GM12878 (cell line): ENCODE measurements at regions of chr1 and their contacts with region 1.

Region 1: DNA sequence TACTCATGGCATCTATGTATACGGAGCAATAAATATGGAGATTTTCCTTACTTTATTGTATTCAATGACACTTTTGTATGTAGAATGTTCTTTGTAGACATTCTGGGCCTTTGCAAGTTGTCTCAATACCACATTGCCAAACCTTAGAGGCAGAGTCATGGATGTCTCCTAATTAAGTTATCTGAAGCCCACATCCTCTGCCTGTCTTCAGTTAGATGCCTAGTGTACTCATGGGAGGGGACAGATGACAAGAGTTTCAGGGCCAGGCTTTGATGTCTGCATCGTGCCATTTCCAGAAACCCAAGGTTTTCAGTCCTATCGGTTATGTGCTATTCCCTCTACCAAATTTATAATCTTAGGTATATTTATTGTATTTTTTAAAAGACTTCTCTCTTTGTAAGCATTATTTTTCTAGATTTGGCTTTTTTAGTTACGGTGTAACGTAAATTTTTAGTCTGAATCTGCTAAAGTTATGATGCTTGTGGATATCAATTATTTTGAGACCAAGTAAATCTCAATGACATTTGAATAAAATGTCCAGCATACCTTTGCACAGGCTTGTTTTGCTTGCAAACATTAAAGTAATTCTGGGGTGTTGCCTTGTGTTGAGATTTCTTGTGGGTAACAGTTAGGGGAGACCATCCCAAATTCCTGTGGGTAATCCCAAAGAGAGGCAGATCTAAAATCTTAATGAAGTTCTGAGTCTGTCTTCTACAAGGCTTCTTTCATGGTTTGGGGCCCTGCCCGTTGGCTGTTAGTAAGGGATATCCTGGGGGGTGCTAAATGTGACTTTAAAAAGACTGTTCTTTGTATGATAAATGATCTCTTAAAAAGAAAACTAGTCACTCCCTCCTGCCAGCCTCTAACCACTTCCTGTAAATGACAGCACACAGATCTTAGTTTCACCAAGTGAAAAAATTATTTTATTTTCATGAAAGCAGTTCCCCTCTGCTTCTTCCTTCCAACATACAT is 8.0 kb upstream of the MACF1 start:
- DNase-seq: no peak
- ATAC-seq: peak; percentile 77
- H3K4me3 ChIP-seq: peak overlapping the region; percentile 26
- H3K27ac ChIP-seq: peak overlapping the region; percentile 53
- H3K4me1 ChIP-seq: peaks cover 54% of the 10 kb centered on the region
- H3K27me3 ChIP-seq: no peaks in the 10 kb centered on the region
- CTCF ChIP-seq: no peak
- EP300 ChIP-seq: peak in 1 of 2 experiments; percentile 60; a peak in 1 of 4 replicates
- POLR2A ChIP-seq: no peak
- RAD21 ChIP-seq: no peak

Region 2: GRCh38 chr1:38671221-38671620 is 525.3 kb before region 1 on chr1:
- CTCF ChIA-PET with region 1: no interaction called
- POLR2A ChIA-PET with region 1: no interaction called
- RAD21 ChIA-PET with region 1: no interaction called
- SMC1A ChIA-PET with region 1: no interaction called
- in situ Hi-C with region 1: no loop called
- intact Hi-C with region 1: no loop called
- DNase-seq: no peak
- ATAC-seq: no peak
- H3K4me3 ChIP-seq: no peak overlapping the region
- H3K27ac ChIP-seq: no peak overlapping the region
- H3K4me1 ChIP-seq: no peaks in the 10 kb centered on the region
- H3K27me3 ChIP-seq: peaks cover 2% of the 10 kb centered on the region in 2 experiments; a peak in 2 of 4 replicates
- CTCF ChIP-seq: no peak
- EP300 ChIP-seq: no peak
- POLR2A ChIP-seq: no peak
- RAD21 ChIP-seq: no peak

Region 3: DNA sequence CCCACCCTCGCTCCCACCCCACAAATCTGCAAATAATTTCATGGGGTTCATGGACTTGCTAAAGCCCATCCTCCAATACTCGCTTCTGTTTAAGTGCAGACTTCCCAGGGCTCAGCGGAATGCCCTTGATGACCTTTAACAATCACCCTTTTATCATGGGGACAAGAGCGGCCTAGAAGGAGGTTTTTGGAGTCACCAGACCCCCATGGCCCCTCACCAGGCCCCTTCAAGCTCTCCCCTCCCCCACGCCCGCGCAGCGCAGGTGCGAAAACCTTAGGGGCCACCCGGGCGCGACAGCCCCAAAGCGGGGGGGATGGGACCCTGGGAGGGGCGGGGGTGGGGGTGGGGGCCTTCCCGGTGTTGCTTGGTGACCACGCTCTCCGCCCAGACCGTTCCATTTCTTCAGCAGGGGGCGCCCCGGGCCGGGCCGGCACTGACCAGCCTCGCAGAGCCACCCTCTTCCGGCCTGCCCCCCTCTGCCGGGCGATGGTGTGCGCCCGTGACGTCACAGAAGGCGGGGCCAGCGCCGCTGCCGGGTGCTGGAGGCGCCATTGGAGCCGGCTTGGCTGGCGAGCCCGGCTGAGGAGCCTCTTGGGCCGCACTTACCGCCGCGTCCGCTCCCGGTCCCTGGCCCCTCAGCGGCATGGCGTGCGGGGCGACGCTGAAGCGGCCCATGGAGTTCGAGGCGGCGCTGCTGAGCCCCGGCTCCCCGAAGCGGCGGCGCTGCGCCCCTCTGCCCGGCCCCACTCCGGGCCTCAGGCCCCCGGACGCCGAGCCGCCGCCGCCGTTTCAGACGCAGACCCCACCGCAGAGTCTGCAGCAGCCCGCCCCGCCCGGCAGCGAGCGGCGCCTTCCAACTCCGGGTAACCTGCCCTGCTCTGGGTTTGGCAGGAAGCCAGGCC is 205.5 kb before region 1 on chr1 and contains the start of gene AKIRIN1:
- CTCF ChIA-PET with region 1: no interaction called
- POLR2A ChIA-PET with region 1: no interaction called
- RAD21 ChIA-PET with region 1: no interaction called
- SMC1A ChIA-PET with region 1: no interaction called
- in situ Hi-C with region 1: no loop called
- intact Hi-C with region 1: no loop called
- DNase-seq: peak; percentile 84
- ATAC-seq: peak; percentile 95
- H3K4me3 ChIP-seq: peak within 1 kb of the TSS; percentile 100
- H3K27ac ChIP-seq: peak within 1 kb of the TSS; percentile 85
- H3K4me1 ChIP-seq: no peaks in the 10 kb centered on the region
- H3K27me3 ChIP-seq: no peaks in the 10 kb centered on the region
- CTCF ChIP-seq: no peak
- EP300 ChIP-seq: no peak
- POLR2A ChIP-seq: peak; percentile 99
- RAD21 ChIP-seq: no peak
- polyA plus RNA-seq, gene AKIRIN1: 7.5 to 16.3 TPM

Region 4: DNA sequence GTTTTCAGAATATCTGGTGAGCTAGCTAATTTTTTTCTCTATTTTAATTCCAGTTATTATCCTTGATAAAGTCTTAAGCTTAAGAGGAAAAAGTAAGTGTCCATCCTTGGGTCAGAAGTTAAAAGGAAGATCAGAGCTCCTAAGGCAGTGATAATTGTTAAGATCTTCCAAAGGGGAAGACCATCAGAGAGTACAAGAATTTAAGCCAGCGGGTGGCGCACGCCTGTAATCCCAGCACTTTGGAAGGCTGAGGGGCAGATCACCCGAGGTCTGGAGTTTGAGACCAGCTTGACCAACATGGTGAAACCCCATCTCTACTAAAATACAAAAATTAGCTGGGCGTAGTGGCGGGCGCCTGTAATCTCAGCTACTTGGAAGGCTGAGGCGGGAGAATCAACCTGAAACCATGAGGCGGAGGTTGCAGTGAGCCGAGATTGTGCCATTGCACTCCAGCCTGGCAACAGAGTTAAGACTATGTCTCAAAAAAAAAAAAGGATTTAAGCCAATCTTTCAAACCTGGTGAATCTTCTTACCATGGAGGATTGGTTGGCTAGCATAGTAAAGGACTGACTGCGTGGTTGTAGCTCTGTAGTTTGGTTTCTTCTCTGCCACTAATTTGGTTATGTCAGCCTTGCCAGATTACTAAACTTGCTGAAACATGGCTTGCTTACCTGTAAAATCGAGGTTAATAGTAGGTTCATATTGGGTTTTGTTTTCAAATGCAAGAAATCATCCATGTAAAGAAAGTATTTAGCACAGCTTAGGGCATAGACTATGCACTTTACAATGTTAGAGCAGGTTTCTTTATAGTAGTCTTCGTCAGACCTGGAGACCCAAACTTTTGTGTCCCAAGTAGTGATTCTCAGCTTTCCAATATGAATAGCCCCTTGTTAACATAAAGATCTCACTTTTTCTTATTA is 189.5 kb before region 1 on chr1:
- CTCF ChIA-PET with region 1: no interaction called
- POLR2A ChIA-PET with region 1: no interaction called
- RAD21 ChIA-PET with region 1: no interaction called
- SMC1A ChIA-PET with region 1: no interaction called
- in situ Hi-C with region 1: no loop called
- intact Hi-C with region 1: no loop called
- DNase-seq: no peak
- ATAC-seq: no peak
- H3K4me3 ChIP-seq: no peak overlapping the region
- H3K27ac ChIP-seq: no peak overlapping the region
- H3K4me1 ChIP-seq: no peaks in the 10 kb centered on the region
- H3K27me3 ChIP-seq: no peaks in the 10 kb centered on the region
- CTCF ChIP-seq: no peak
- EP300 ChIP-seq: no peak
- POLR2A ChIP-seq: no peak
- RAD21 ChIP-seq: no peak

Region 5: GRCh38 chr1:39091845-39092645 is 104.5 kb before region 1 on chr1:
- CTCF ChIA-PET with region 1: interaction called, 465 read pairs
- POLR2A ChIA-PET with region 1: interaction called, 3 read pairs
- RAD21 ChIA-PET with region 1: interaction called, 304 read pairs
- SMC1A ChIA-PET with region 1: interaction called, 164 read pairs
- in situ Hi-C with region 1: no loop called
- intact Hi-C with region 1: no loop called
- DNase-seq: no peak
- ATAC-seq: peak; percentile 89
- H3K4me3 ChIP-seq: no peak overlapping the region
- H3K27ac ChIP-seq: no peak overlapping the region
- H3K4me1 ChIP-seq: peaks cover 6% of the 10 kb centered on the region
- H3K27me3 ChIP-seq: no peaks in the 10 kb centered on the region
- CTCF ChIP-seq: peak; percentile 71 to 78 (median 78)
- EP300 ChIP-seq: no peak
- POLR2A ChIP-seq: no peak
- RAD21 ChIP-seq: peak; percentile 82

Region 6: DNA sequence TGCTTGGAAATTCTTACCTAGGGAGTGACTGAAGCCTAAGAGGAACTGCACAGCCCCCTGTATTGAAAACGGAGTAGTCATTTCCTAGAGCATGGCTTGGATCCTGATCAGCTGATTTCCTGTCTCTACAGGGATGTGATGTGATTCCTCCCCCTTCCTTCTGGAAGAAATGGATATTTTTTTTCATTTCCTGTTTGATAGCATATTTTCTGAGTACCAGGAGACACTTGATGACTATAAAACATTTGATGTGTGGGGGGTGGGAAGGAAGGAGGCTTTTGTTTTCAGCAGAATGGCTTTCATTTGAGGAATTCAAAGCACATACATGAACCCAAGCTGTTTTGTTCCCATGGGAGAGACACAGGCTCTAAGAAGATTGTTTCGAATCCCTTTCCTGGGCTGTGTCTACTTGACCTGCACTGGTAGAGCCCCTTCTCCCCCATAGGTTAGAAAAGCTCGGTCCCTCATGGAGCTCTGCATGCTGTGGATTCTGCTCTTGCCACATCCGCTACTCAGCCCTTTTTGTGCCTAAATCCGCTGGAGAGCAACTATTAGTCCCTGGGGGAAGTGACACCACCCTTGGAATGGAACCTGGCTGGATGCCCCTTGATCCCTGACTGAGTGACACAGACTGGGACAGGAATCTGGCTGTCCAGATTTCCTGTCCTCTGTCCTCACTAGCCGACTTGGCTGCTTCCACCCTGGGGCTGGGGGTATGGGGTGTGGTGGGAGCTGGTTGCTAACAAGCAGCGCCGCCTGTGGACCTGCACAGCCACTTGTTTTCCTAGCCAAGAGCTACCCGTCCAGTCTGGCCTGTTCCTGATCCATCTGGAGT is 63.8 kb before region 1 on chr1:
- CTCF ChIA-PET with region 1: interaction called, 48 read pairs
- POLR2A ChIA-PET with region 1: no interaction called
- RAD21 ChIA-PET with region 1: interaction called, 21 read pairs
- SMC1A ChIA-PET with region 1: interaction called, 35 read pairs
- in situ Hi-C with region 1: no loop called
- intact Hi-C with region 1: no loop called
- DNase-seq: no peak
- ATAC-seq: no peak
- H3K4me3 ChIP-seq: no peak overlapping the region
- H3K27ac ChIP-seq: no peak overlapping the region
- H3K4me1 ChIP-seq: no peaks in the 10 kb centered on the region
- H3K27me3 ChIP-seq: no peaks in the 10 kb centered on the region
- CTCF ChIP-seq: no peak
- EP300 ChIP-seq: no peak
- POLR2A ChIP-seq: no peak
- RAD21 ChIP-seq: no peak

Region 7: DNA sequence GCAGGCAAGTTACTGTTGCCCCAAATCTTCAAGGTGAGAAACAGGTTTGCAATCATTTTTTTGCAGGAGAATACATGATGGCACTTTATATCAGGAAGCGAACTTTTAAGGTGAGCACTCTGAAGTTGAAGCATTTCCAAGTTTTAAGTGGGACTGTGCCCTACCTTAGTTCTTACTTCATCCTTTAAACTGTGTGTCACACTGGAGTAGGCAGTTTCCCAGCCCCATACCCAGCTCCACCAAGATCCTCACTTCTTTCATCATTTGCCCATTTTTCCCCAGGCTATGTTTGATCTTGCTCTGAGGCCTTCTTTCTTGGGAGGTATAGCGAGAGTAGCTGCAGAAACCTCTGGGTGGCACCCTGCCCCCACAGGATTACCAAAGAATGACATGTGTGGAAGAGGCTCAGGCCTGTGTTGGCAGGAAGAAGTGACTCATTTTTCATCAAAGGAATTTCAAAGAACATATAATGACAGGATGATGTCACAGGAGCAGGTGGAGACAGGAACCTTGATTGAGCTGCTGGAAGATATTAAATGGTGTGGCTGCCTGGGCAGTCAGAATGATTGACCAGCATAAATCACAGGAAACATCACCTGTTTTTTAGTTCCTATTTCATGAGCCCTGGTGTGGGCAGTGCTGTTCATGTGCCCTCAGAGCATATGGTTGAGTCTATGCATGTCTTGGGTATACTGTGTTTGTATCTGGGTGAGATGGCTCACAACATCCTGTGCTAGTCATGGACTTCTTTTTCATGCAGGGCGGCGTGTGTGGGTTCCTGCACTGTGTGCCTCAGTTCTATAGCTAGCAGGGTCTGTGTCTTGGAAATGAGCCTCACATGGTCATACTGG is 12.8 kb before region 1 on chr1:
- CTCF ChIA-PET with region 1: interaction called, 49 read pairs
- POLR2A ChIA-PET with region 1: interaction called, 6 read pairs
- RAD21 ChIA-PET with region 1: interaction called, 12 read pairs
- SMC1A ChIA-PET with region 1: interaction called, 23 read pairs
- in situ Hi-C with region 1: no loop called
- intact Hi-C with region 1: no loop called
- DNase-seq: no peak
- ATAC-seq: peak; percentile 87
- H3K4me3 ChIP-seq: no peak overlapping the region
- H3K27ac ChIP-seq: peak overlapping the region; percentile 1; the same call in 1 of the 2 replicates
- H3K4me1 ChIP-seq: peaks cover 15% of the 10 kb centered on the region
- H3K27me3 ChIP-seq: no peaks in the 10 kb centered on the region
- CTCF ChIP-seq: peak; percentile 55 to 59 (median 57)
- EP300 ChIP-seq: no peak
- POLR2A ChIP-seq: no peak
- RAD21 ChIP-seq: peak; percentile 45

Region 8: GRCh38 chr1:39258146-39258924 is 61.8 kb after region 1 on chr1:
- CTCF ChIA-PET with region 1: interaction called, 918 read pairs
- POLR2A ChIA-PET with region 1: interaction called, 44 read pairs
- RAD21 ChIA-PET with region 1: interaction called, 393 read pairs
- SMC1A ChIA-PET with region 1: interaction called, 655 read pairs
- in situ Hi-C with region 1: no loop called
- intact Hi-C with region 1: loop called (anchors 1 kb)
- DNase-seq: no peak
- ATAC-seq: peak; percentile 69
- H3K4me3 ChIP-seq: no peak overlapping the region
- H3K27ac ChIP-seq: no peak overlapping the region
- H3K4me1 ChIP-seq: peaks cover 27% of the 10 kb centered on the region
- H3K27me3 ChIP-seq: no peaks in the 10 kb centered on the region
- CTCF ChIP-seq: peak; percentile 81 to 90 (median 85)
- EP300 ChIP-seq: no peak
- POLR2A ChIP-seq: no peak
- RAD21 ChIP-seq: peak; percentile 90

Region 9: GRCh38 chr1:39328095-39328494 is 131.6 kb after region 1 on chr1:
- CTCF ChIA-PET with region 1: interaction called, 7 read pairs
- POLR2A ChIA-PET with region 1: no interaction called
- RAD21 ChIA-PET with region 1: no interaction called
- SMC1A ChIA-PET with region 1: interaction called, 17 read pairs
- in situ Hi-C with region 1: no loop called
- intact Hi-C with region 1: no loop called
- DNase-seq: no peak
- ATAC-seq: no peak
- H3K4me3 ChIP-seq: no peak overlapping the region
- H3K27ac ChIP-seq: no peak overlapping the region
- H3K4me1 ChIP-seq: no peaks in the 10 kb centered on the region; the same call in 1 of the 2 replicates
- H3K27me3 ChIP-seq: no peaks in the 10 kb centered on the region
- CTCF ChIP-seq: no peak
- EP300 ChIP-seq: no peak
- POLR2A ChIP-seq: no peak
- RAD21 ChIP-seq: no peak

Region 10: DNA sequence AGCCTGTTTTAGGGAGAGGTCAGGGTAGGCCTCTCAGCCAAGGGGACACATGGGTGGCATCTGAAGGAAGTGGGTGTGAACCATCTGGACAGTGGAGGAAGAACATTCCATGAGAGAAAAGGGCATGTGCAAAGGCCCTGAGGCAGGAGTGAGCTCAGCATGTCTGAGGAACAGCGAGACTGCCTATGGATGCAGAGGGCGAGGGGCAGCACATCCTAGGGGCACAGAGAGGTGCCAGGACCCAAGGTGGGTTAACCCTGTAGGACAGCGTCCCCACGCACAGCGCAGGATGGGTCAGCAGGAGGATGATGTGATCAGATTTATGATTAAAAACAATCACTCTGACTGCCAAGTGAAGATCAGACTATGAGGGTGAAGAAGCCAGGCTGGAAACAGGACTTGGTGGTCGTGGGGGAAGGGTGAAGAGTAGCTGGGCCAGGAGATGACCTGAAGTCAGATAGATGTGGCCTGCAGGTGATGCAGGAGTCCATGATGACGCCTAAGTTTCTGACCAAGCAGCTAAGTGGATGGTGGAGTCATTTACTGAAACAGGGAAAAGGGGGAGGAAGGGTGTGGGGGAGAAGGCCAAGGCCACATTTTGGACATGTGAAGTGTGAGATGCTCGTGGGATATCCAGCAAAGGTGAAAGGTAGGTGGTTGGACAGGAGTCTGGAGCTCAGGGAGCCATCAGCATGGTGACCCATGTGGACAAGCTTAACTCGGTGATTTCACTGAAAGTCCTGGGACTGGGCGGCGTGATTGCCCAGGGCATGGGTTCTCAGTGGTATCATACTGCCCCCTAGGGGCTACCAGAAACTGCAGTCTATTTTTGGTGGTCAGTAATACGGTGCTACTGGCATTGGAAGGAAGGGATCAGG is 342.3 kb after region 1 on chr1:
- CTCF ChIA-PET with region 1: interaction called, 11 read pairs
- POLR2A ChIA-PET with region 1: no interaction called
- RAD21 ChIA-PET with region 1: interaction called, 9 read pairs
- SMC1A ChIA-PET with region 1: interaction called, 10 read pairs
- in situ Hi-C with region 1: no loop called
- intact Hi-C with region 1: no loop called
- DNase-seq: peak; percentile 27
- ATAC-seq: peak; percentile 100
- H3K4me3 ChIP-seq: no peak overlapping the region
- H3K27ac ChIP-seq: no peak overlapping the region
- H3K4me1 ChIP-seq: peaks cover 10% of the 10 kb centered on the region
- H3K27me3 ChIP-seq: no peaks in the 10 kb centered on the region
- CTCF ChIP-seq: peak; percentile 89 to 91 (median 90)
- EP300 ChIP-seq: no peak
- POLR2A ChIP-seq: no peak
- RAD21 ChIP-seq: peak; percentile 93